A673 (cell line): ENCODE measurements at regions of chr3 and their contacts with region 1.

Region 1: DNA sequence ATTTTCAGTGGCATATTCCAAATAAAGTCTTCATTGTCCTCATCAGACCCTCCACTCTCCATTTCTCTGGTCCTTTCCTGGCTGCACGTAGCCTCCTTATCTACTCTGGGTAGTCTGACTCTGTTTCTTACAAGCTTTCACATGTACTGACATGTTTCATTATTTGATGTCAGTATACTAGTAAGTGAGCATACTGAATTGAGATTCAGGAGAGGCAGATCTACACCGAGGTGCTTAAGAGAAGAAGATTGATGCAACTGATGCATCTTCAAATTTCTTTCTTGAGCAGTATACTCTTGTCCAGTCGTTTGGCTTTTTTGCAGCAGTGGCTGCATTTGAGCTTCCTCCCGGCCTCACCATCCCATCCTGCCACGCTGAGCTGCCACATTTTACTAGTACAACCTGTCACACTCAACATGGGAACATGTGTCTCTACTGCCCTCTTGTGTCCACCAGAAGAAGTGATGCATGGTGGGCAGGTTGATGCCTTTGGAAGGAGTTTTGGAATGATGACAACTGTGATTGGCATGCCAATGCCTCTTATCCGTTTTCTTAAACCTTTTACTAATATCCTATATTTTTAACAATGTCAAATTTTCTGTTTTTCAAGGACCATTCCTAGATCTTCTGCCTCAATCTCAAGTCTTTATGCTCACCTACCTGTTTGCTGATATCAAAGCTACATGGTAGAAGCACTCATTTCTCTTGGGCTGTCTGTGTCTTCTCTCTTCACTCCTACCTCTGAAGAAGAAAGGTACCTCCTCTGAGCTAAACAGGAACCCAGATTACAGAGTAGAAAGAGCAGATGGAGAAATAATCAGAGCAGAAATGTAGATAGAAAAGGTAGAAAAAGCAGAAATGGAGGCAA is 38.7 kb downstream of the GUCA1C start:
- DNase-seq: peak; percentile 82
- H3K4me3 ChIP-seq: no peak overlapping the region
- H3K27ac ChIP-seq: no peak overlapping the region
- H3K4me1 ChIP-seq: no peaks in the 10 kb centered on the region
- H3K27me3 ChIP-seq: peaks cover 6% of the 10 kb centered on the region
- CTCF ChIP-seq: peak; percentile 90

Region 2: GRCh38 chr3:108489771-108490170 is 425.2 kb before region 1 on chr3:
- CTCF ChIA-PET with region 1: interaction called, 4 read pairs
- POLR2A ChIA-PET with region 1: no interaction called
- intact Hi-C with region 1: loop called (anchors 2 kb)
- DNase-seq: peak; percentile 68
- H3K4me3 ChIP-seq: no peak overlapping the region
- H3K27ac ChIP-seq: no peak overlapping the region
- H3K4me1 ChIP-seq: peaks cover 22% of the 10 kb centered on the region
- H3K27me3 ChIP-seq: no peaks in the 10 kb centered on the region
- CTCF ChIP-seq: peak; percentile 82

Region 3: DNA sequence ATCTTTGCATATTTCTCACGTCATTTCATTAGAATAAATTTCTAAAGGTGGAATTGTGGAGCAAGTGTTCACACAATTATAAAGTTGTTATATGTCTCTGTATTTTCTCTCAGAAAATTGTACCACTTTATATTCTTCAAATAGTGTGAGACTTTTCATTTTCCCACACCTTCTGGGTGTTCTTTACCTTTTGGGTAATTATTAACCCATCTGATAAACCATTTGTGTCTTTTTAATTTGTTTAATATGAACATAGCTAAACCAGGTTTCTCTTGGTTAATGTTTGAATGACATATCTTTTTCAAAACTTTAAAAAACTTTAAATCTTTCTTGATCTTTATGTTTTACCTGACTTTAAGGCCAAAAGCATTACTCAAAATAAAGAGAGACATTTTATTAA is 285.0 kb before region 1 on chr3:
- CTCF ChIA-PET with region 1: interaction called, 10 read pairs
- POLR2A ChIA-PET with region 1: no interaction called
- intact Hi-C with region 1: no loop called
- DNase-seq: no peak
- H3K4me3 ChIP-seq: no peak overlapping the region
- H3K27ac ChIP-seq: no peak overlapping the region
- H3K4me1 ChIP-seq: no peaks in the 10 kb centered on the region
- H3K27me3 ChIP-seq: no peaks in the 10 kb centered on the region
- CTCF ChIP-seq: no peak

Region 4: GRCh38 chr3:108662130-108662738 is 252.8 kb before region 1 on chr3:
- CTCF ChIA-PET with region 1: interaction called, 15 read pairs
- POLR2A ChIA-PET with region 1: no interaction called
- intact Hi-C with region 1: loop called (anchors 1 kb)
- DNase-seq: peak; percentile 84
- H3K4me3 ChIP-seq: no peak overlapping the region
- H3K27ac ChIP-seq: no peak overlapping the region
- H3K4me1 ChIP-seq: no peaks in the 10 kb centered on the region
- H3K27me3 ChIP-seq: no peaks in the 10 kb centered on the region
- CTCF ChIP-seq: peak; percentile 78

Region 5: DNA sequence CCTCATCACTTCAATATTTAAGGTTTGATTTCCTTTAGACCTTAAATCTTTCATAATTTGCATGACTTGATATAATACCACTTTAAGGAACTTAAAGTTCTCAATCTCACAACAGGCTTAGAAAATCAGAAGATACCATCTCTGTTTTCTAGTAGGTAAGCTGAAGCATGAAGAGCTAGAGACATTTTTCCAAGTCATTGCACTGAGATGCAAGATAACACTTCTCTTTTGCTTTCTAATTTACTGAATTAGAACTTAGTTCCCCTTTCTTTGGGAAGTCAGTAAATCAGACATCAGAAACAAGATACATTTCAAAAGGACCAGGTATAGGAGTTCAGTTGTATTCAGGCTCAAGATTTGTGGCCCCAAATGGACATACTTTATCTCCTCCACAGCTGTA is 245.8 kb before region 1 on chr3:
- CTCF ChIA-PET with region 1: interaction called, 12 read pairs
- POLR2A ChIA-PET with region 1: no interaction called
- intact Hi-C with region 1: no loop called
- DNase-seq: no peak
- H3K4me3 ChIP-seq: no peak overlapping the region
- H3K27ac ChIP-seq: no peak overlapping the region
- H3K4me1 ChIP-seq: no peaks in the 10 kb centered on the region
- H3K27me3 ChIP-seq: no peaks in the 10 kb centered on the region
- CTCF ChIP-seq: no peak

Region 6: GRCh38 chr3:108818404-108818803 is 96.6 kb before region 1 on chr3:
- CTCF ChIA-PET with region 1: interaction called, 4 read pairs
- POLR2A ChIA-PET with region 1: no interaction called
- intact Hi-C with region 1: loop called (anchors 5 kb)
- DNase-seq: peak; percentile 75
- H3K4me3 ChIP-seq: no peak overlapping the region
- H3K27ac ChIP-seq: no peak overlapping the region
- H3K4me1 ChIP-seq: no peaks in the 10 kb centered on the region
- H3K27me3 ChIP-seq: no peaks in the 10 kb centered on the region
- CTCF ChIP-seq: peak; percentile 71

Region 7: GRCh38 chr3:108973019-108973418 is 58.0 kb after region 1 on chr3:
- CTCF ChIA-PET with region 1: no interaction called
- POLR2A ChIA-PET with region 1: no interaction called
- intact Hi-C with region 1: no loop called
- DNase-seq: no peak
- H3K4me3 ChIP-seq: no peak overlapping the region
- H3K27ac ChIP-seq: no peak overlapping the region
- H3K4me1 ChIP-seq: peaks cover 14% of the 10 kb centered on the region
- H3K27me3 ChIP-seq: no peaks in the 10 kb centered on the region
- CTCF ChIP-seq: no peak

Region 8: GRCh38 chr3:109081746-109082510 is 166.9 kb after region 1 on chr3:
- CTCF ChIA-PET with region 1: no interaction called
- POLR2A ChIA-PET with region 1: no interaction called
- intact Hi-C with region 1: loop called (anchors 5 kb)
- DNase-seq: peak; percentile 65
- H3K4me3 ChIP-seq: no peak overlapping the region
- H3K27ac ChIP-seq: no peak overlapping the region
- H3K4me1 ChIP-seq: no peaks in the 10 kb centered on the region
- H3K27me3 ChIP-seq: no peaks in the 10 kb centered on the region
- CTCF ChIP-seq: peak; percentile 87